Mammary epithelial cell (primary cell): ENCODE measurements at regions of chr7 and their contacts with region 1.

Region 1: DNA sequence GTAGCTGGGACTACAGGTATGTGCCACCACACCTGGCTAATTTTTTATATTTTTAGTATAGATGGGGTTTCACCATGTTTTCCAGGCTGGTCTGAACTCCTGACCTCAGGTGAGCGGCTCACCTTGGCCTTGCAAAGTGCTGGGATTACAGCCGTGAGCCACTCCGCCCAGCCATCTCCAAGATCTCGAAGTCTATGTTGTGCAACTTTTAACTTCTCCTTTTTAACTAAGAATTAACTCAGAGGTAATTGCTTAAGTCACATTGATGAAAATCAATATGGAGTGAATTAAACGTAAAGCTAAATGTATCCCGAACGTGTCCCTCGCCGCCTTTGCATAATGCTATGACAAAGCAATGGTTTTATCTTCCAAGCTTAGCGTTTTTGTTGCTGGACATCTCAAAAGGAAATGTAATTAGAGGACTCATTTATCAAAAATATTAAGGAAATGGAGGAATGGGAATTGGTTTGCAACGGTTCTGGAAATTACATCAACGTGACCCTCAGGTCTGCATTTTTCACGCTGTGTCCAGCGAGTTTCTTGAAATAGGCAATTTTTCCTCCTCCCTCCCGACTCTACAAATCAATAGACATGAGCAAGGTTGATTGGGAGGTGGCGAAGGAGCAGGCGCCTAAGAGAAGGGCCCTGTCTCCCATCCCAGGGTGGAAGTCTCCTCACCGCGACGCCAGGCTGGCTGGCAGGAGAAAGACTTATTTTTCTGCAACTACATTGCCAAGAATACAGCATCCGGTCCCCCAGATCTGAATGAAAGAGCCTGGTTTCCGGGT is 89.8 kb downstream of the TMEM130 start:
- DNase-seq: no peak
- H3K4me3 ChIP-seq: no peak overlapping the region
- H3K27ac ChIP-seq: no peak overlapping the region
- H3K4me1 ChIP-seq: no peaks in the 10 kb centered on the region
- H3K27me3 ChIP-seq: no peaks in the 10 kb centered on the region
- CTCF ChIP-seq: no peak

Region 2: GRCh38 chr7:98650424-98650823 is 129.6 kb before region 1 on chr7:
- CTCF ChIA-PET with region 1: no interaction called
- dilution Hi-C with region 1: loop called (anchors 5 kb)
- in situ Hi-C with region 1: no loop called
- intact Hi-C with region 1: no loop called
- DNase-seq: no peak
- H3K4me3 ChIP-seq: no peak overlapping the region
- H3K27ac ChIP-seq: no peak overlapping the region
- H3K4me1 ChIP-seq: no peaks in the 10 kb centered on the region
- H3K27me3 ChIP-seq: no peaks in the 10 kb centered on the region
- CTCF ChIP-seq: no peak

Region 3: DNA sequence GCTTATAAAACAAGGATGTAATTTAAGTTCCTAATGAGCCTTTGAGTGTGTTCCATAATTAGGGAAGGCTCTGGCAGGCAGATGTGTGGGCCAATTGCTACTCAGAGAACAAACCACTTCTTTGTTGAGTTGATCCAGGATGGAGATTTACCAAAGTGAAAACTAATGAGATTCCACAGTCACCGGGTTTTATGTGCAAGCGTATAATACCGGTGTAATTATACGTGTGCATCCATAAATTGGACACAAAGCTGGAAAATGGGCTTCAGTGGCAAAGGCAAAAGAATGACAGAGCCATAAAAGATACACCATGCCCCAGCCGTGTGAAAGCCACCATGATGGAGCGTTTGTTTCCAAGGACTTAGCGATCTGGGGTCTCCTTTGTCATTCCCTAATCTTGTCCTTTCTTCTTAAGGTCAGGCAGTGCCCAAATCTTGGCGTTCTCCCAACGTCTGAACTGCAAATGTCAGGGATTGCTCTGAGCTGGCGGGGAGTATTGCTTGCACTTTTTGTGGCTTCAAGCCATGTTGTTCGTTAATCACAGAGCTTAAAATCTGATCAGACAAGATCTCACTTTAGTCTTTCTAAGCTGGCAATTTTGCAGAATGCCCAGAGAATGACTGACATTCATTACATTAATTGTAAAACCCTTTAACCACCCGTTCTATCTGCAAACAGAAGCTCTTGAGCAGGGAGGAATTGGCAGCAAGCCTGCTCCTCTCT is 92.8 kb before region 1 on chr7:
- CTCF ChIA-PET with region 1: no interaction called
- dilution Hi-C with region 1: loop called (anchors 5 kb)
- in situ Hi-C with region 1: no loop called
- intact Hi-C with region 1: no loop called
- DNase-seq: no peak
- H3K4me3 ChIP-seq: no peak overlapping the region
- H3K27ac ChIP-seq: no peak overlapping the region
- H3K4me1 ChIP-seq: no peaks in the 10 kb centered on the region
- H3K27me3 ChIP-seq: no peaks in the 10 kb centered on the region
- CTCF ChIP-seq: no peak

Region 4: DNA sequence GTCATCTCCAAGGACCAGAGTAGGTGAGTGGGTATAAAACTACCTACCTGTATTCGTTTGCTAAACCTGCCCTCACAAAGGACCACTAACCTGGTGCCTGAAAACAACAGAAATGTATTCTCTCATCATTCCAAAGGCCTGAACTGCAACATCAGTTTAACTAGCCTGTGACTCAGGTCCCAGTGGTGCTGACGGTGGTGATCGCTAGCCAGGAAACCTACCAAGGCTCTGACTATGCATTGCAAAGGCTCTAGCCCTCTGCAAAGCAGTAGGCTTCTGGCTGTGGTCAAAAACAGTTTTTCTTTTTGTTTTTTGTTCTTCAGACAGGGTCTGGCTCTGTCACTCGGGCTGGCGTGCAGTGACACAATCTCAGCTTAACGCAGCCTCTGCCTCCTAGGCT is 55.4 kb before region 1 on chr7:
- CTCF ChIA-PET with region 1: no interaction called
- dilution Hi-C with region 1: loop called (anchors 5 kb)
- in situ Hi-C with region 1: no loop called
- intact Hi-C with region 1: no loop called
- DNase-seq: no peak
- H3K4me3 ChIP-seq: no peak overlapping the region
- H3K27ac ChIP-seq: no peak overlapping the region
- H3K4me1 ChIP-seq: no peaks in the 10 kb centered on the region
- H3K27me3 ChIP-seq: no peaks in the 10 kb centered on the region
- CTCF ChIP-seq: no peak

Region 5: GRCh38 chr7:98795741-98796493 is 15.9 kb after region 1 on chr7:
- CTCF ChIA-PET with region 1: no interaction called
- dilution Hi-C with region 1: no loop called
- in situ Hi-C with region 1: no loop called
- intact Hi-C with region 1: no loop called
- DNase-seq: no peak
- H3K4me3 ChIP-seq: no peak overlapping the region
- H3K27ac ChIP-seq: no peak overlapping the region
- H3K4me1 ChIP-seq: no peaks in the 10 kb centered on the region
- H3K27me3 ChIP-seq: no peaks in the 10 kb centered on the region
- CTCF ChIP-seq: no peak

Region 6: DNA sequence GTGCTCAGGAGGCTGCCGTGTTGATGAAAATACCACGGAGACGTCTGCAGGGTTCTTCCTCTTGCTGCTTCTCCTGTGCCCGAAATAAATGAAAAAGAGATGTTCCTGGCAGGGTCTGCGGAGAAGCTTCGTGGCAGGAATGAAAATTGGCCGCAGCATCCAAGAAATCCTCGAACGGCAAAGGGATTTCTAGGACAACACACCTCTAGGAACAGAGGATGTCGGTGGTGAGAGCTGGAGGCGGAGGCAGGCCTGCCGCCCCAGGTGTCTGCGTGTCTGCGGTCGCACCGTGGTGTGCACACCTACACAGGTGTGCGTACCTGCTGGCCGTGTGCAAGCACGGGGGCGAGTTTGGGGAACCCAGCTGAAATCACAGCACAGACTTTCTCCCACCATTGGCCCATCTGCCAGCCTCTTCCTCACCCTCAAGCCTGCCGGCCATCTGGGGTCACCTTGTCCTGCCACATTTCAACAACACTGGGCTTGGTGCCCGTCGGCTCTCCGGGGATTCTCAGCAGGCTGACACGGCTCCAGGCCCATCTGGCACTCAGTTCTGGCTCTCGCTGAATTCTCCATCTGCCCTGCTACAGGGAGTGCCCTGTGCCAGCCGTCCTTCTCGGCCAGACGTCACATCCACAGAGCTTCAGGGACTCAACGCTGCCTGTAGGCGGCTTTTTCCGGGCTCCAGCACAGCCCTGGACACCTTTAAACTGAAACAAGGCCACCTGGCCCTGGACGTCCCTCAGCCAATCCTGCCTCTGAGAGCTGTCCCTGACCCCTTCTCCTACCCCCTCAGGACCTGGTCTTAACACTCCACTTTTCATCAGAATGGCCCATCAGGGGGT is 46.6 kb after region 1 on chr7:
- CTCF ChIA-PET with region 1: no interaction called
- dilution Hi-C with region 1: loop called (anchors 5 kb)
- in situ Hi-C with region 1: no loop called
- intact Hi-C with region 1: no loop called
- DNase-seq: peak; percentile 40
- H3K4me3 ChIP-seq: peak overlapping the region in 1 of 3 experiments; percentile 26
- H3K27ac ChIP-seq: no peak overlapping the region
- H3K4me1 ChIP-seq: peaks cover 15% of the 10 kb centered on the region
- H3K27me3 ChIP-seq: no peaks in the 10 kb centered on the region
- CTCF ChIP-seq: peak in 1 of 2 donors; percentile 32